ENCODE measurements at regions of chr4 and their contacts with region 1.

Region 1: GRCh38 chr4:186037692-186038658 is 31.0 kb upstream of the TLR3 start:
- DNase-seq: peak; percentile 37
- ATAC-seq: peak; percentile 42
- H3K4me3 Mint-ChIP-seq: no peak overlapping the region
- H3K27ac Mint-ChIP-seq: no peak overlapping the region
- H3K4me1 Mint-ChIP-seq: no peaks in the 10 kb centered on the region
- H3K27me3 Mint-ChIP-seq: peaks cover 28% of the 10 kb centered on the region
- CTCF ChIP-seq: peak; percentile 81

Region 2: GRCh38 chr4:185640811-185641675 is 396.9 kb before region 1 on chr4:
- CTCF ChIA-PET with region 1: interaction called, 30 read pairs
- POLR2A ChIA-PET with region 1: no interaction called
- intact Hi-C with region 1: no loop called
- DNase-seq: no peak
- ATAC-seq: no peak
- H3K4me3 Mint-ChIP-seq: no peak overlapping the region
- H3K27ac Mint-ChIP-seq: no peak overlapping the region
- H3K4me1 Mint-ChIP-seq: peaks cover 2% of the 10 kb centered on the region
- H3K27me3 Mint-ChIP-seq: peaks cover 31% of the 10 kb centered on the region
- CTCF ChIP-seq: no peak

Region 3: GRCh38 chr4:186021461-186022167 is 16.4 kb before region 1 on chr4:
- CTCF ChIA-PET with region 1: interaction called, 25 read pairs
- POLR2A ChIA-PET with region 1: no interaction called
- intact Hi-C with region 1: no loop called
- DNase-seq: peak; percentile 4
- ATAC-seq: no peak
- H3K4me3 Mint-ChIP-seq: no peak overlapping the region
- H3K27ac Mint-ChIP-seq: no peak overlapping the region
- H3K4me1 Mint-ChIP-seq: no peaks in the 10 kb centered on the region
- H3K27me3 Mint-ChIP-seq: peaks cover 3% of the 10 kb centered on the region
- CTCF ChIP-seq: peak; percentile 22

Region 4: DNA sequence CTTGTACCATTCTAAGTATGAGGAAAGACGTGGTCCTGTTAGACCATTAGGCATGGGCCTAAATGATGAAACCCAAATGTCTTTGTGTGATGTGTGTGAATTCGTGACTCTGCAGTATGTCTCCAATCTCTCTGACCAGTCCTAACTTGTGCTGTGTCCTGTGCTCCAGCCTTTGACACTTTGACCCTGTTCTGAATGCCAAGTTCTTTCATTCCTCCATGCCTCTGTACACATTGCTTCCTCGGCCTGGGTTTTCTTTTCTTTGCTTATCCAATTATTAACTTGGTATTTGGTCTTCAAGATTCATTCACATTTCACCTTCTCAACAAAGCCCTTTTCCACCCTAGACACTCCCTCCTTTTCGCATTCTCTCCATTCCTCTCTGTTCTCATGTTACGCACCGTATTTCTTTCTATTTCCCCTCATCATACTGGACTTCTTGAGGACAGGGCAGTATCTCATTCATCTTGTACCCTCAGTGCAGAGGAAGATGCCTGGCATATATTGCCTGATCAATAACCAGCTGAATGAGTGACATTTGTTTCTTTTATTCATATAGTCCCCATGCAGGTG is 366.7 kb after region 1 on chr4:
- CTCF ChIA-PET with region 1: no interaction called
- POLR2A ChIA-PET with region 1: no interaction called
- intact Hi-C with region 1: no loop called
- DNase-seq: no peak
- ATAC-seq: no peak
- H3K4me3 Mint-ChIP-seq: no peak overlapping the region
- H3K27ac Mint-ChIP-seq: no peak overlapping the region
- H3K4me1 Mint-ChIP-seq: no peaks in the 10 kb centered on the region
- H3K27me3 Mint-ChIP-seq: peaks cover 3% of the 10 kb centered on the region
- CTCF ChIP-seq: no peak

Region 5: DNA sequence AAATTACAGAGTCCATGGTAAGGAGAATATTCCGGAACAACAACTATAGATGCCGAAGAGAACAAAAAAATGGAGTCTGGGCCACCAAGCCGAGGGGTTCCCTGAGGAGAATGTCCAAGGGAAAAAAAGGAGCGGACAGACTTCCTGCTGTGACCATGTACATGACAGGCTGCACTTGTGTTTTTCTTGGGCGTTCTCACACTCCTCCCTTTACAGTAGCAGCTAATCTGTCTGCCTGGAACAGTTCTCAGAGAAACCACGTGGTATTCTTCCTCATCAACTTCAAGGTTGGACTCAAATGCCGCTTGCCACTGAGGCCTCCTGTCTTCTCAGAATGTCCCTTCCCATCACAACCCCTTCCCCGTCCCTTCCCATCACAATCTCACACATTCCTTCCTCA is 548.2 kb after region 1 on chr4:
- CTCF ChIA-PET with region 1: no interaction called
- POLR2A ChIA-PET with region 1: no interaction called
- intact Hi-C with region 1: no loop called
- DNase-seq: no peak
- ATAC-seq: no peak
- H3K4me3 Mint-ChIP-seq: no peak overlapping the region
- H3K27ac Mint-ChIP-seq: no peak overlapping the region
- H3K4me1 Mint-ChIP-seq: no peaks in the 10 kb centered on the region
- H3K27me3 Mint-ChIP-seq: no peaks in the 10 kb centered on the region
- CTCF ChIP-seq: no peak

Measured in activated CD8-positive, alpha-beta T cell treated with anti-CD3 and anti-CD28 coated beads for 36 hours (primary cell).